ENCODE measurements at regions of chr19 and their contacts with region 1.

Region 1: DNA sequence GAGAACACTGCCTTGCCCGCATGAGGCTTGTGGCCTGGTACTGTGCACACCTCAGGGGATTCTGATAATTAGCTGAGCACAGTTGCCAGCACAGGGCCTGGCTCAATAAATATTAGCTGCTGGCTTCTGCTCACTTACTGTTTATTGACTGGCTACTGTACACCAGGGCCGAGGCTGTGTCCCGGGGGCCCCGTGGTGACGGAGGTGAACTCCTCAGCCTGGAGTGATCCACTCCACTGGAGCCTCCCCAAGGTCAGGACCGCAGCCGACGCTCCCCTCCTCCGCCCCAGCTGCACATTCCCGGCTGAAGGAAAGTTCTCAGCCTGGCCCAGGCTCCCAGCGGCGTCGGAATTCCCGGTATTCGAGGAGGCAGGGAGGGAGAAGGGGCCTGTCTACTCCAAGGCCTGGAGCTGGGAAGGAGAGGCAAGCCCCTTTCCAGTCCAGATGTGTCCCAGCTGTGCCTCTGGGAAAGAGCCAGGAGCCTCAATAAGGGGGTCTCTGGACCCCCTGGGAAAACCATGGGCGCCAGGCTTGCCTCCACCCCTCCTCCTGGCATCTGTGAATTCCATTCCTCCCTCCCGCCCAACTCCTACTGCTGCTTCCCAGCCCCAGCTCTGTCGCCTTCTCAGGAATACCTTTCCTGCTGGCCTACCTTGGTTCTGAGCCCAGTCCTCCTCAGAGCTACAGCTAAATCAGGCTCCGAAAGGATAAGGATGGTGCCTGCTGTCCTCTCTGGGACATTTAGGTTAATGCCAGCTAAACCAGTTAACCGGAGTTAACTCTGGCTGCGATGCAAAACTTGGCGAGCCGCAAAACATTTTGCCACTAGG is 7.3 kb downstream of the RPS16 start:
- DNase-seq: peak; percentile 80
- H3K4me3 ChIP-seq: no peak overlapping the region
- H3K27ac ChIP-seq: peak overlapping the region; percentile 41 to 81
- H3K4me1 ChIP-seq: peaks cover 19% of the 10 kb centered on the region
- H3K27me3 ChIP-seq: no peaks in the 10 kb centered on the region
- CTCF ChIP-seq: no peak
- POLR2A ChIP-seq: no peak

Region 2: DNA sequence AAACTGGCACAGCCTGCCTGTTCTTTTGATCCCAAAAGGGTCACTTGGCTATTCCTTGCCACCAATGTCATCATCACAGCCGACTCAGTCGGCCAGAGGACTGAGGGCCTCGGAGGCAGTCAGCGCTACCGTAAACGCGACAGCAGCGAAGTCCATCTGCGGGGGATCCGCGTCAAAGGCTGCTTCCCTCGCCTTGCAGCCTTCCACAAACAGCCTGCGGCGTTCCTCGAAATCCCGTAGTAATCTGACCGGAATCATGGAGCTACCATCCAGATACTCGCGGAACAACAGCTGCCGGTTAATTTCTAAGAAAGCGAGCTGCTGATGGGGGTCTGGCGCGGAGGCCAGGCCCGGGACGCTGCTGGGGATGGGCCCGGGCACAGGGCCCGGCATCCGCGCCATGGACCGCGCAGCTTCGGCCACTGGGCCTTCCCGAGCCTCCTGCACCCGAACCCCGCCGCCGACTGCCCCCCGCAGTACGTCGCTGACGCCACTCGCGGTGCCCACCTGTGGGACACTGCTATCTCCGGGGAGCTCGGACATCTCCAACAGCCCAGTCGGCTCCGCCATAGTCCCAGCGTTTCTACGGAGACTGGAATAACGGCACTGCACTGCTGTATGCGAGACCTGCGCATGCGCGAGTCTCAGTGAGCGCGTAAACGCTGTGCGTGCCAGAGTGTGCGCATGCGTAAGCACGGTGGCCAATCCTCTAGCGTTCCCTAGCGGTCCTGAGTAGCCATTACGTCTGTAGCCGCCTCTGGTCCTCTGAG is 103.9 kb after region 1 on chr19 and contains the start of gene EID2B:
- intact Hi-C with region 1: loop called (anchors 10 kb)
- DNase-seq: peak; percentile 96
- H3K4me3 ChIP-seq: peak within 1 kb of the TSS; percentile 84 to 96
- H3K27ac ChIP-seq: peak within 1 kb of the TSS; percentile 89 to 92
- H3K4me1 ChIP-seq: peaks cover 12% of the 10 kb centered on the region
- H3K27me3 ChIP-seq: no peaks in the 10 kb centered on the region
- CTCF ChIP-seq: peak; percentile 94 to 100 (median 99)
- POLR2A ChIP-seq: peak; percentile 91
- total RNA-seq, gene EID2B: 9.2 to 12.2 TPM

Region 3: DNA sequence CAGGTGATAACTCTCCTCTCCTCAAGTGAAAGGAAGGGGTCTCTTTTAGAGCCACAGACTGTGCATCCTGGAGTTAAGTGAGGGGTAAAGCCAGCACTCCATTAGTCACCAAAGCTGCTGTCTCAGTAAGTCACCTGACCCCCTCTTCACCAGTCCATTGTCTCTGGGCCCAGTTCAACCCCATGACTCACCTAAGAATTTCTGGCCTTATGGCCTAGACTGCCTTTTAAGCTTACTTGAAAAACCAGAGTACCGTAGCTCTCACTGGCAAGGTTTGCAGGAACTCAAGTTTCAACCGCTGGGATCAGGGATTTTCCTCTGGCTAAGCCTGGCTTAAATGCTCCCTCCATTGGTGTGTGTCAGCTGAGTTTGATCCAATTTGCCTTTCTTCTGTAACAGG is 134.9 kb after region 1 on chr19:
- intact Hi-C with region 1: no loop called
- DNase-seq: no peak
- H3K4me3 ChIP-seq: no peak overlapping the region
- H3K27ac ChIP-seq: no peak overlapping the region
- H3K4me1 ChIP-seq: no peaks in the 10 kb centered on the region
- H3K27me3 ChIP-seq: no peaks in the 10 kb centered on the region
- CTCF ChIP-seq: no peak
- POLR2A ChIP-seq: no peak